HCT116 (cell line): ENCODE measurements at regions of chr11 and their contacts with region 1.

Region 1: GRCh38 chr11:58259985-58260384 is 8.1 kb downstream of the OR10W1 start:
- DNase-seq: no peak
- ATAC-seq: no peak
- H3K4me3 ChIP-seq: no peak overlapping the region
- H3K27ac ChIP-seq: no peak overlapping the region
- H3K4me1 ChIP-seq: no peaks in the 10 kb centered on the region
- H3K27me3 ChIP-seq: peaks cover 10% of the 10 kb centered on the region
- CTCF ChIP-seq: no peak
- POLR2A ChIP-seq: no peak
- RAD21 ChIP-seq: no peak

Region 2: GRCh38 chr11:58222721-58223120 is 37.3 kb before region 1 on chr11:
- CTCF ChIA-PET with region 1: no interaction called
- POLR2A ChIA-PET with region 1: no interaction called
- RAD21 ChIA-PET with region 1: no interaction called
- intact Hi-C with region 1: no loop called
- DNase-seq: no peak
- ATAC-seq: no peak
- H3K4me3 ChIP-seq: no peak overlapping the region
- H3K27ac ChIP-seq: no peak overlapping the region
- H3K4me1 ChIP-seq: no peaks in the 10 kb centered on the region
- H3K27me3 ChIP-seq: no peaks in the 10 kb centered on the region
- CTCF ChIP-seq: no peak
- POLR2A ChIP-seq: no peak
- RAD21 ChIP-seq: no peak

Region 3: GRCh38 chr11:58301576-58301975 is 41.6 kb after region 1 on chr11:
- CTCF ChIA-PET with region 1: no interaction called
- POLR2A ChIA-PET with region 1: no interaction called
- RAD21 ChIA-PET with region 1: no interaction called
- intact Hi-C with region 1: loop called (anchors 2 kb)
- DNase-seq: no peak
- ATAC-seq: no peak
- H3K4me3 ChIP-seq: no peak overlapping the region
- H3K27ac ChIP-seq: no peak overlapping the region
- H3K4me1 ChIP-seq: no peaks in the 10 kb centered on the region
- H3K27me3 ChIP-seq: no peaks in the 10 kb centered on the region
- CTCF ChIP-seq: no peak
- POLR2A ChIP-seq: no peak
- RAD21 ChIP-seq: no peak